Activated CD4-positive, alpha-beta T cell treated with anti-CD3 and anti-CD28 coated beads, Interleukin-2, amount 10 ng/mL, durations not matched to agents 24 days and 14 days (primary cell): ENCODE measurements at regions of chr4 and their contacts with region 1.

Region 1: DNA sequence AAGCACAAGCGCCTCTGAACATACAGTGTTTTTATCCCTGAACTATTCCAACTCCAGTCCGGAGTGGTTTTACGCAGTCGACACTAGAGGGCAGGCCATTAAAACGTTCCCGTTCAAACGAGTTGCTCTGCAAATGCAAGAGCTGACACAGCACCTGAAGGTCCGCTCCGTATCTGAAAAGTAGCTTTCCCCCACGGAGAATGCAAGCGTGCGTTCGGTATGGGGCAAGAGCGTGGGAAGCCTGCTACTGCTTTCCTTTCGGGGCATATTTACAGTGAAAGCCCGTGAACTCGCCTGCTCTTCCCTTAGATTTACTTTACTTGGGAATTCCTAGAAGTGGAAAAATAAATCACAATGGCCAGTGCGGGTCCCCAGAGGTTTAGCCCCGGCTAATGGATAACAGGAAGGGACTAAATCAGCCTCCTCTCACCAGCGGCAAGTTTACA is 190.8 kb downstream of the TSPAN5 start:
- DNase-seq: peak; percentile 92
- H3K4me3 Mint-ChIP-seq: peak overlapping the region; percentile 79
- H3K27ac Mint-ChIP-seq: peak overlapping the region; percentile 38
- H3K4me1 Mint-ChIP-seq: peaks cover 33% of the 10 kb centered on the region
- H3K27me3 Mint-ChIP-seq: no peaks in the 10 kb centered on the region

Region 2: GRCh38 chr4:98150092-98150761 is 317.4 kb before region 1 on chr4:
- intact Hi-C with region 1: loop called (anchors 5 kb)
- DNase-seq: no peak
- H3K4me3 Mint-ChIP-seq: no peak overlapping the region
- H3K27ac Mint-ChIP-seq: no peak overlapping the region
- H3K4me1 Mint-ChIP-seq: peaks cover 6% of the 10 kb centered on the region
- H3K27me3 Mint-ChIP-seq: peaks cover 8% of the 10 kb centered on the region

Region 3: GRCh38 chr4:98383431-98384106 is 84.1 kb before region 1 on chr4:
- intact Hi-C with region 1: no loop called
- DNase-seq: no peak
- H3K4me3 Mint-ChIP-seq: no peak overlapping the region
- H3K27ac Mint-ChIP-seq: no peak overlapping the region
- H3K4me1 Mint-ChIP-seq: peaks cover 5% of the 10 kb centered on the region
- H3K27me3 Mint-ChIP-seq: no peaks in the 10 kb centered on the region

Region 4: DNA sequence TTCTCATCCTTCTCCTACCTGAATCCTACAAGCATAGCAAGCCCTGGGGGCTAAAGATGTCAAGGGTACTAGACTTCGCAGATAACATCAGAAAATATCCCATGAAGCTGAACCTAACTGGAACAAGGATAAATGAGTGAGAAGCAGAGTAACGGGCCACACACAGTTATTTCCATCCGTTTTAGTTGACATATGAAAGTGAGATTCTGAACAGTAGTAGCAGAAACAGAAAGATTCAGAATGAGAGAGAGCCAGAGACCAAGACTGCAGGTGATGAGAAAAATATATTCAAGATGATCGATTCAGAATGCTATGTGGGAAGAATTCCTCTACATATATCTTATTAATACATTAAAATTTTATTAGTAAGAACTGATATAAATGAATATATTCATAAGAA is 25.6 kb after region 1 on chr4:
- intact Hi-C with region 1: no loop called
- DNase-seq: no peak
- H3K4me3 Mint-ChIP-seq: peak overlapping the region; percentile 32
- H3K27ac Mint-ChIP-seq: peak overlapping the region; percentile 84
- H3K4me1 Mint-ChIP-seq: peaks cover 31% of the 10 kb centered on the region
- H3K27me3 Mint-ChIP-seq: no peaks in the 10 kb centered on the region

Region 5: DNA sequence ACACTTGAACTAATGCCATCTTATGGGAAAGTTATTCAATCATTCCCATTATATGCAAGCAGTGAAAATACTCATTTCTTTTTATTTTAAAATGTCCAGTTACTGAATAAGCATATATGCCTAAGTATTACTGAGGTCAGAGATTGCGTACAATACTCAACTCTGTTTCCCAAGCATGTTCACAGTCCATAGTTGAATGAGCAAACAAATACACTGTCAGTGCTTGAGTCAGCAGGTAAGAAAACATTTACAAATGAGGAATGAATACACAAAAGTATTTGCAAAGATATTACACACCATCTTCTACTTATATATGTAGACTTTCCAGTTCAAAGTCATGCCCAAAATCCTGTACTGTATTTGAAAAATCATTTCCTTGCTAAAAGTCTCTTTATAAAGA is 116.6 kb after region 1 on chr4:
- intact Hi-C with region 1: no loop called
- DNase-seq: no peak
- H3K4me3 Mint-ChIP-seq: no peak overlapping the region
- H3K27ac Mint-ChIP-seq: no peak overlapping the region
- H3K4me1 Mint-ChIP-seq: peaks cover 14% of the 10 kb centered on the region
- H3K27me3 Mint-ChIP-seq: no peaks in the 10 kb centered on the region

Region 6: DNA sequence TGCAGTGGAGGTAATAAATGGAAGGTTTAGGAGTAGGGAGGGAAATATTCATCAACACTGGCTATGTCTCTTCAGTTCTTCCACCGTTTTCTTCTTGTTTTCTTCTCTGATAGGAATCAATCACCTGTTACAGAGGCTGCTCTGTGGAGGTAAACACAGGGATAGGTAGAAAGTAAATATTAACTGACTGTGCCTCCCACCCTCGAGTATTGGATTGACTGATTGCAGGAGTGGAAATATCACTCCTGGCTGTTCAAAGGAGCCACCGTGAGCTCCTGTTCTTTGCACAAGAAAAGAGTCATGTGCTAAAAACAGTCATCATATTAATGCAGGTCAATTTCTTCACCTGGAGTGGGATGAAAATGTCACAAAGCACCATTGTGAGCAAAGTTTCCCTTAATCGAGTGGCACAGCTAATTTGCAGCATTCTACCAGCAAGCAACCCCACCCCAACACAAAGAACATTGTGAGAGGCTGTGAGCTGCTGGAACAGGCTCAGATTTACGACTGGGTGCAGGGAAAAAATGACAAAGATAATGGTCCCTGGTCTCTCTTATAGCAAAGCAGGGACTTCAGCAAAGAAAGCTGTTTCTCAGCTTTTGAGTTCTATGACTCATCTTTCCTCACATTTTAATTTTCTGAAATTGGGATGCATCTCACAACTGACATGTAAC is 304.4 kb after region 1 on chr4:
- intact Hi-C with region 1: no loop called
- DNase-seq: no peak
- H3K4me3 Mint-ChIP-seq: no peak overlapping the region
- H3K27ac Mint-ChIP-seq: no peak overlapping the region
- H3K4me1 Mint-ChIP-seq: no peaks in the 10 kb centered on the region
- H3K27me3 Mint-ChIP-seq: peaks cover 2% of the 10 kb centered on the region

Region 7: GRCh38 chr4:98828801-98829200 is 361.2 kb after region 1 on chr4:
- intact Hi-C with region 1: loop called (anchors 2 kb)
- DNase-seq: peak; percentile 68
- H3K4me3 Mint-ChIP-seq: no peak overlapping the region
- H3K27ac Mint-ChIP-seq: no peak overlapping the region
- H3K4me1 Mint-ChIP-seq: peaks cover 6% of the 10 kb centered on the region
- H3K27me3 Mint-ChIP-seq: peaks cover 11% of the 10 kb centered on the region